Heart left ventricle (tissue), 16 donors: ENCODE measurements at regions of chr14 and their contacts with region 1.

Region 1: DNA sequence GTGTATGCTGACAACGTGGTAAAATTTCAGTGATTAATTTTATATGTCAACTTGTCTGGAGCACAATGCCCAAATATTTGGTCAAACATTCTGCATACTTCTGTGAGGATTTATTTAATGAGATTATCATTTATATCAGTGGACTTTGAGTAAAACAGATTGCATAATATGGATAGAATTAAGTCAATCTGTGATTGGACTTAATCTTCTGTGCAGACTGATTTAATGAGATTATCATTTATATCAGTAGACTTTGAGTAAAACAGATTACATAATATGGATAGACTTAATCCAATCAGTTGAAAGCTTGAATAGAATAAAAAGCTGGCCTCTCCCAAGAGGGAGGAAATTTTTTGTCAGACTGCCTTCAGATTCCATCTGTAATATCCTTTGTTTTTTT is 1413.1 kb downstream of the LRFN5 start:
- DNase-seq: no peak
- ATAC-seq: no peak
- H3K4me3 ChIP-seq: no peak overlapping the region
- H3K27ac ChIP-seq: no peak overlapping the region
- H3K4me1 ChIP-seq: no peaks in the 10 kb centered on the region
- H3K27me3 ChIP-seq: no peaks in the 10 kb centered on the region
- CTCF ChIP-seq: no peak
- POLR2A ChIP-seq: no peak

Region 2: DNA sequence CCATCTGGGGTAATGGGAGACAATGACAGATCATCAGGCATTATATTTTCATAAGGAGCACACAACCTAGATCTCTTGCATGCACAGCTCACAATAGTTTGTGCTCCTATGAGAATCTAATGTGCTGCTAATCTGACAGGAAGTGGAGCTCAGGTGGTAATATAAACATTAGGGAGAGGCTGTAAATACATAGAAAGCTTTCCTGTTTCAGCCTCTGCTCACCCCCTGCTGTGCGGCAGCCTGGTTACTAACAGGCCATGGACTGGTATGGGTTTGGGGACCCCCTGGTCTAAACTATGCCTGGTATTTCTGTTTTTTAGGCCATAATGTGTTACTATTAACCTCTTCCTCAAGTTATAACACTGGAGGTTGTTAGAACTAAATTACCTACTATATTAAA is 39.4 kb before region 1 on chr14:
- intact Hi-C with region 1: no loop called
- DNase-seq: no peak
- ATAC-seq: no peak
- H3K4me3 ChIP-seq: no peak overlapping the region
- H3K27ac ChIP-seq: no peak overlapping the region
- H3K4me1 ChIP-seq: no peaks in the 10 kb centered on the region
- H3K27me3 ChIP-seq: no peaks in the 10 kb centered on the region
- CTCF ChIP-seq: no peak
- POLR2A ChIP-seq: no peak

Region 3: DNA sequence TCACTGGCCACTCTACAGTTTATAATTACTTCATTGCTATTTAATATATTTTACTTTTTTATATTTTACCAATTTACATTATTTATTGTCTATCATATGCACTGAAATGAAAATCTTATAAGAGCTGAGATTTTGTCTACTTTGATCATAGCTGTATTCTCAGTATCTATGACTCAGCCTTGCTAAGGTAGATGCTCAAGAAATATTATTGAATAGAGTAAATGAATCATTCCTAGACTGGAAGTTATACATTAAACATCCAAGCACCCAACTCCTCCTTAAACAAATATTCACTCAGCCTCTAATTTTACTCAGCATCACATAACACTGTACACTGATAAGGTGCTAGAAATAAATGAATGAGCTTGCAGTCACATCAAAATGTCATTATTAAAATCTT is 11.8 kb after region 1 on chr14:
- intact Hi-C with region 1: loop called in 1 of 10 experiments (anchors 1 kb)
- DNase-seq: no peak
- ATAC-seq: no peak
- H3K4me3 ChIP-seq: no peak overlapping the region
- H3K27ac ChIP-seq: no peak overlapping the region
- H3K4me1 ChIP-seq: no peaks in the 10 kb centered on the region
- H3K27me3 ChIP-seq: no peaks in the 10 kb centered on the region
- CTCF ChIP-seq: no peak
- POLR2A ChIP-seq: no peak